GM10248 (cell line): ENCODE measurements at regions of chr21 and their contacts with region 1.

Region 1: GRCh38 chr21:42309753-42310221 is 5.4 kb downstream of the TFF3 start:
- DNase-seq: peak; percentile 84
- CTCF ChIP-seq: peak; percentile 97

Region 2: GRCh38 chr21:40976198-40977109 is 1333.3 kb before region 1 on chr21:
- CTCF ChIA-PET with region 1: no interaction called
- POLR2A ChIA-PET with region 1: no interaction called
- DNase-seq: no peak
- CTCF ChIP-seq: no peak

Region 3: GRCh38 chr21:41725421-41726041 is 584.3 kb before region 1 on chr21:
- CTCF ChIA-PET with region 1: no interaction called
- POLR2A ChIA-PET with region 1: no interaction called
- DNase-seq: no peak
- CTCF ChIP-seq: no peak

Region 4: GRCh38 chr21:42258153-42258884 is 51.5 kb before region 1 on chr21:
- CTCF ChIA-PET with region 1: interaction called, 23 read pairs
- POLR2A ChIA-PET with region 1: interaction called, 3 read pairs
- DNase-seq: peak; percentile 90
- CTCF ChIP-seq: peak; percentile 91

Region 5: GRCh38 chr21:42324896-42325295 is 15.1 kb after region 1 on chr21:
- CTCF ChIA-PET with region 1: interaction called, 25 read pairs
- POLR2A ChIA-PET with region 1: interaction called, 3 read pairs
- DNase-seq: no peak
- CTCF ChIP-seq: no peak

Region 6: GRCh38 chr21:42381334-42381984 is 71.7 kb after region 1 on chr21:
- CTCF ChIA-PET with region 1: interaction called, 13 read pairs
- POLR2A ChIA-PET with region 1: no interaction called
- DNase-seq: no peak
- CTCF ChIP-seq: peak; percentile 29

Region 7: DNA sequence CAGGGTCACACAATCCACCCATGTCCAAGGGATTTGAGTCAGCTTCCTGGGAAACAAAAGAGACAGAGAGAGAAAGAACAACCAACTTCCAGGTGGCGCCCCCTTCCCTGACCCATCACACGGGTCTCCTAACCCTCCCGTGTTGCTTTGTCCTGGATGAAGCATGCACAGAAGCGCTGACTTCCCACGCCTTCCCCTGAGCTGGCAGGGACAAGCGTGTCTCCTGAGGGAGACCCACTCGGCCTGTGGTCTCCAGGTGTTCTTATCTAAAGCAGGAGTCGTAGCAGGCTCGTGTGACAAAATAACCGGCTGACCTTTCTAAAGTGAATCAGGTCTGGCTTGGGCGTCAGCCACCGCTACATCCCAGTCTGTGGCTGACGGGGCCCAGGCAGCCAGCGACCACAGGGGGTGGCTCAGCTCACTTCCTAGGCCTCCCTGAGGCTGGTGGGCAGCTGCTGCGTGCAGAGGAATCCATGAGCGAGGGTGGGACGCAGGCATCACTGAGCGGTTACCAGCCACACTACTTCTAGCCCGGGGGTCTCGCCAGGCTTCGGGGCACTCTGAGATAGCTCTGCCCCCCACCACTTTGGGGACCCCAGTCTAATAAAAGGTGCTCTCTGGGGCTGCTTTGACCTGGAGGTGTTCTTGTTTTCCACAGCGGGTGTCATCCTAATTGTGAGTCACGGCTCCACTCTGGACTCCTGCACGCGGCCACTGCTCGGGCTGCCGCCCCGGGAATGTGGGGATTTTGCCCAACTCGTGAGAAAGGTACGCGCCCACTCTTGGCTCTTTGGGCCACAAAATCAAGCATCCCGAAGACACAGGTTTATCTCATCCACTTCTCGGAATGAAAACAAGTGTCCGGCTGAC is 134.3 kb after region 1 on chr21:
- CTCF ChIA-PET with region 1: interaction called, 49 read pairs
- POLR2A ChIA-PET with region 1: no interaction called
- DNase-seq: no peak
- CTCF ChIP-seq: no peak

Region 8: GRCh38 chr21:42496122-42496900 is 186.5 kb after region 1 on chr21 and contains the start of gene RSPH1:
- CTCF ChIA-PET with region 1: no interaction called
- POLR2A ChIA-PET with region 1: no interaction called
- DNase-seq: peak; percentile 99
- CTCF ChIP-seq: peak; percentile 13

Region 9: DNA sequence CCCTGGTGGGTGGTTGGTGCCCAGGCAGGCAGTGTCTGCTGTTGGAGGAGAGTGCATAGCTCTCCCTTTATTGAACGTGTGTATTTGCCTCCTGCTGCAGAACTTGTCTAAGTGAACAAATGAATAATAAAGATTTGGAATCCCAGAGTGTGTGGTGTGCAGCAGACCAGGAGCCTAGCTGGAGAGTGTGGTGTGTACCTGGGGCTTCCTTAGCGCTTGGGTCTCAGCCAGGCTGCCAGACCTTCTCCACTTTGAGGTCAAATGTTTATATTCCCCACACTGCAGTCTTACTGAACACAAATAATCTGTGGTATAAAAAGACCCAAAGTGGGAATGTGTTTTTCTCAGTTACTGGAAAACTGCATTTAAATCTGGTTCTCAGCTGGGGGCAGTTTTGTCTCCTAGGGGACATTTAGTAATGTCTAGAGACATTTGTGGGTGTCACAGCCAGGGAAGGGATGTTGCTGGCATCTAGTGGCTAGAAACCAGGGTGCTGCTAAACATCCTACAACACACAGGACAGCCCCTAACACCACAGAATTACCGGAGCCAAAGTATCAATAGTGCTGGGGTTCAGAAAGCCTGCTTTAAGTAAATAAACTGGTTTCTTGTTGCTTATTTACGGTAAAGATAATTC is 227.4 kb after region 1 on chr21:
- CTCF ChIA-PET with region 1: interaction called, 25 read pairs
- POLR2A ChIA-PET with region 1: interaction called, 3 read pairs
- DNase-seq: no peak
- CTCF ChIP-seq: peak; percentile 55